Mammary epithelial cell (primary cell): ENCODE measurements at regions of chr2 and their contacts with region 1.

Region 1: GRCh38 chr2:99180755-99181623 is at the starts of genes MITD1 and MRPL30:
- DNase-seq: peak; percentile 96
- H3K4me3 ChIP-seq: peak within 1 kb of the TSS; percentile 92 to 97 (median 94)
- H3K27ac ChIP-seq: peak within 1 kb of the TSS; percentile 75
- H3K4me1 ChIP-seq: peaks cover 3% of the 10 kb centered on the region
- H3K27me3 ChIP-seq: no peaks in the 10 kb centered on the region
- CTCF ChIP-seq: no peak
- total RNA-seq, gene MITD1: 10.2 to 26.2 TPM
- total RNA-seq, gene MRPL30: 33.5 to 35.1 TPM

Region 2: DNA sequence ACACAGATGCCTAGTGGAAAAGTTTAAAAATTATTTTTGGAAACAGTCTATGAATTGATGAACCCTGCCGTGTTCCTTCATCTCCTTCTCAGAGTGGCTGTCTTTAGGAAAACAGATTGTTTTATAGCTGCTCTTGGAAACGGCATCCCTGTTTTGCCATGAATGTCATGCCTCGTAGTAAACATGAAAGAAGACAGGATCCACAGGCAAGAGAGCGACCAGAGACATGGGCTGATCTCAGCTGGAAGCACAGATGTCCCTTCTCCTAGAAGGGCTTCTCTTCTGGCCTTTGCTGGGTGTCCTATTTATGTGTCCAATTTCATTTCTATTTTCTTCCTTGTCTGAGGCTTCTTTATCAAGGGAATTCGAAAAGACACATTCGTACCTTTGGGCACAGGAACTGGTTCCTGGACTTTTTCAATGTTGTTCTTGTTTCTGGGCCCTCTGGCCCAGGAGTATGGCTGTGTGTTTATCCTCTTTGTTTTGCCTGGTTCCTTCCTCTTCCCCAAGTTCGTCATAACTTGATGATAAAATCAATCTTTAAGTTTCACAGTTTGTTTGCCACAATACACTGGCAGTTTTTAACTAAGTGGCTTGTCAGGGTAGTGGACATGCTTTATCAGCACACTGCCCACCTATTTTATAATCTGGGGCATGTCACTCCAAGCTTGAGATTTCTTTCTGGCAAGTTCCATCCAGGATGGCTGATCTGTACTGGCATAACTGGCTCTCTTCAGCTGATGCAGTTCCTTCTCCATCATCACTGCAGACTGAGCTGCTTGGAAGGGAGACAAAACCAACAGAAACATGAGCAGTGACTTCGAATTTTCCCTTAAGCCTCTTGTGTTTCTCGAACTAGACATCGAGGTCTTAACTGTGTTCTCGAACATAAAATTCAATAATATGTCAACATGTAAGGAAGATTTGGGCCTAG is 386.8 kb before region 1 on chr2:
- CTCF ChIA-PET with region 1: no interaction called
- dilution Hi-C with region 1: no loop called
- in situ Hi-C with region 1: no loop called
- intact Hi-C with region 1: loop called (anchors 1 kb)
- DNase-seq: no peak
- H3K4me3 ChIP-seq: no peak overlapping the region
- H3K27ac ChIP-seq: peak overlapping the region; percentile 31
- H3K4me1 ChIP-seq: peaks cover 28% of the 10 kb centered on the region
- H3K27me3 ChIP-seq: no peaks in the 10 kb centered on the region
- CTCF ChIP-seq: no peak

Region 3: DNA sequence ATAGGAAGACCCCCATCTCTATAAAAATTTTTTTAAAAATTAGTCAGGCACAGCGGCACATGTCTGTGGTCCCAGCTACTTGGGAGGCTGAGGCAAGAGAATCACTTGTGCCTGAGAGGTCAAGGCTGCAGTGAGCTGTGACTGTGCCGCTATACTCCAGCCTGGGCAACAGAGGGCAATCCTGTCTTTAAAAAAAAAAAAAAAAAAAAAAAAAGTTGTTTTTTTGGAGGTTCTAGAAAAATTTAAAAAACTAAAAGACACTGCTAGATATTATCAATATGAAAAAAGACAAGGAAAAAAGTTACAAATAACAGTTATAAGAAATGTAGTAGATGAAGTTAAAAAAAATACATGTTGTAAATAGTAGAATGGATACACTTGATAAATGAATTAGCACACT is 95.6 kb before region 1 on chr2:
- CTCF ChIA-PET with region 1: no interaction called
- dilution Hi-C with region 1: no loop called
- in situ Hi-C with region 1: no loop called
- intact Hi-C with region 1: loop called (anchors 2 kb)
- DNase-seq: peak; percentile 5
- H3K4me3 ChIP-seq: no peak overlapping the region
- H3K27ac ChIP-seq: no peak overlapping the region
- H3K4me1 ChIP-seq: no peaks in the 10 kb centered on the region
- H3K27me3 ChIP-seq: no peaks in the 10 kb centered on the region
- CTCF ChIP-seq: peak; percentile 29 to 50

Region 4: GRCh38 chr2:99154643-99155536 is 26.1 kb before region 1 on chr2 and contains the starts of genes LIPT1 and TSGA10:
- CTCF ChIA-PET with region 1: interaction called, 7 read pairs
- dilution Hi-C with region 1: no loop called
- in situ Hi-C with region 1: no loop called
- intact Hi-C with region 1: loop called (anchors 1 kb)
- DNase-seq: peak; percentile 89
- H3K4me3 ChIP-seq: peak within 1 kb of the TSS; percentile 75 to 82 (median 78)
- H3K27ac ChIP-seq: peak within 1 kb of the TSS; percentile 78
- H3K4me1 ChIP-seq: peaks cover 11% of the 10 kb centered on the region
- H3K27me3 ChIP-seq: no peaks in the 10 kb centered on the region
- CTCF ChIP-seq: peak in 1 of 2 donors; percentile 24
- total RNA-seq, gene LIPT1: 3.7 to 4.4 TPM
- total RNA-seq, gene TSGA10: 5.7 to 6.0 TPM

Region 5: DNA sequence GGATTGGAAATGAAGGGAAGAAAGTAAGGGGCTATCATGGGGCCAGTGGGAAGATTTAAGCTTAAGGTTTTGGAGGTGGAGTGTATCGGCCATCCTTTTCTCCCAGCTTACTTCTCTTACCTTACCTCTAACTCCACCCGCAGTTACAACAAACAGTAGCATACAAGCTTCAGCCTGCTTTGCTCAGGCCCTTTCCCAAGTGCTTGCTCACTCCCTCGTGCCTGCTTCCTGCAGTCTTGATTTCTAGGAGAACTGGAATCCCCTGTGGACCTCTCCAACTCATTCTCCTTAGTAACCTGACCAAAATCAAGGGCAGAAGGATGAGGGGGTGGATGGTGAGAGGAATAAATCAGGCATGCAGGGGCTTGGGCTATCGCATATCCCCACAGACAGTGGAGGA is 80.3 kb after region 1 on chr2:
- CTCF ChIA-PET with region 1: no interaction called
- dilution Hi-C with region 1: no loop called
- in situ Hi-C with region 1: no loop called
- intact Hi-C with region 1: no loop called
- DNase-seq: peak; percentile 35
- H3K4me3 ChIP-seq: no peak overlapping the region
- H3K27ac ChIP-seq: no peak overlapping the region
- H3K4me1 ChIP-seq: peaks cover 9% of the 10 kb centered on the region
- H3K27me3 ChIP-seq: no peaks in the 10 kb centered on the region
- CTCF ChIP-seq: no peak

Region 6: GRCh38 chr2:99337113-99338028 is 156.4 kb after region 1 on chr2 and contains the start of gene EIF5B:
- CTCF ChIA-PET with region 1: no interaction called
- dilution Hi-C with region 1: no loop called
- in situ Hi-C with region 1: no loop called
- intact Hi-C with region 1: loop called (anchors 1 kb)
- DNase-seq: peak; percentile 94
- H3K4me3 ChIP-seq: peak within 1 kb of the TSS; percentile 69 to 93 (median 86)
- H3K27ac ChIP-seq: peak within 1 kb of the TSS; percentile 87
- H3K4me1 ChIP-seq: peaks cover 27% of the 10 kb centered on the region
- H3K27me3 ChIP-seq: no peaks in the 10 kb centered on the region
- CTCF ChIP-seq: peak; percentile 17 to 75
- total RNA-seq, gene EIF5B: 19.5 to 64.1 TPM

Region 7: GRCh38 chr2:99818842-99819241 is 637.9 kb after region 1 on chr2:
- CTCF ChIA-PET with region 1: no interaction called
- dilution Hi-C with region 1: no loop called
- in situ Hi-C with region 1: no loop called
- intact Hi-C with region 1: no loop called
- DNase-seq: peak; percentile 24
- H3K4me3 ChIP-seq: no peak overlapping the region
- H3K27ac ChIP-seq: no peak overlapping the region
- H3K4me1 ChIP-seq: no peaks in the 10 kb centered on the region
- H3K27me3 ChIP-seq: no peaks in the 10 kb centered on the region
- CTCF ChIP-seq: peak; percentile 21 to 51

Region 8: DNA sequence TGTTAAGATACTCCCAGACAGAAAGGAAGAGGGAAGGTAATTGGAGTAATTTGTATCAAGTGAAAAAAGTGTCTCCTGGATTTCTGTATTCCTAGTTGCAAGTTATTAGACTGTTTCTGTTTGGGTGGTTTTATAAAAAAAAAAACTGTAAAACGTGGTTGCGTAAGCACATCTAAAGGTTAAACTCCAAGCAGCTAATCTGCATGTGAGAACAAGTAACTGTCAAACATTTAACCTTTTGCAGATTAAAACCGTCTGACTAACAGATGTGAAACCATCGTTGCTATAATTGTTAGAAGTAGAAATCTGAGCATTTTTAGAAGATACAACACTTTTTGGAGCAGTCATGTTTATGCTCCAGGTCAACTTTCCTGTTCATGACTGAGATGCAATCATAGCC is 889.1 kb after region 1 on chr2:
- CTCF ChIA-PET with region 1: no interaction called
- dilution Hi-C with region 1: no loop called
- in situ Hi-C with region 1: no loop called
- intact Hi-C with region 1: no loop called
- DNase-seq: no peak
- H3K4me3 ChIP-seq: no peak overlapping the region
- H3K27ac ChIP-seq: no peak overlapping the region
- H3K4me1 ChIP-seq: no peaks in the 10 kb centered on the region
- H3K27me3 ChIP-seq: peaks cover 2% of the 10 kb centered on the region
- CTCF ChIP-seq: no peak